GM18951 (cell line): ENCODE measurements at regions of chr7 and their contacts with region 1.

Region 1: DNA sequence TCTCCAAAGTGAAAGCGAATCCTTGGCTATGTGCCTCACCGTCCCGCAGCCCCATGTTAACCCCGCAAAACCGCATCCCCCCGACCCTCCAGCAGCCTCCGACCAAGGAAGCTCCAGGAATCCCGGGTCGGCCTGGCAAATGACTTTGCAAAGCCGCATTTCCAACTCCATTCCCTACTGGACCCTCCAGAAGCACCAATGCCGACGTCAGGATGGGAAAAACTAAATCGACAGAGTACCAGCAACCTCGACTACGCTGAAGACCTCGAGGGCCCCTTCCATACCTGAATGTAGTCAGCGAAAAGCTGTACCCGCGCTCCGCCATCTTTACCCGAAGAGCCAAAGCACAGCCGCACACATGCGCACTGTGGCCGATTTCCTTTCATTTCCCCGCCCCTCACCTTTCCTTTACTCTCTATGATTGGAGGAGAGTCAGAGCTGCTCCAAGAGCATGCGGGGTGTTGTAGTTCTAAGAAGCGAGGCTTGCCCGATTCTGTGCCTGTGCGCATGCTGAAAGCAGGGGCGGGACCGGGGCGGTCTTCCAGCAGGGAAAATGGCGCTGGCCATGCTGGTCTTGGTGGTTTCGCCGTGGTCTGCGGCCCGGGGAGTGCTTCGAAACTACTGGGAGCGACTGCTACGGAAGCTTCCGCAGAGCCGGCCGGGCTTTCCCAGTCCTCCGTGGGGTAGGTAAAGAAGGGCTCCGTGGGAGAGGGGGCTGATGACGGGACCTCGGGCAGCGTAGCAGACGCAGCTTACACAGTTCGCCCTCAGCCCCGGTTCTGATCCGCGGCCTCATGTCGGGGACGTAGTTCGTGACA is at the starts of genes MRPL32 and PSMA2:
- POLR2A ChIP-seq: peak; percentile 91

Region 2: DNA sequence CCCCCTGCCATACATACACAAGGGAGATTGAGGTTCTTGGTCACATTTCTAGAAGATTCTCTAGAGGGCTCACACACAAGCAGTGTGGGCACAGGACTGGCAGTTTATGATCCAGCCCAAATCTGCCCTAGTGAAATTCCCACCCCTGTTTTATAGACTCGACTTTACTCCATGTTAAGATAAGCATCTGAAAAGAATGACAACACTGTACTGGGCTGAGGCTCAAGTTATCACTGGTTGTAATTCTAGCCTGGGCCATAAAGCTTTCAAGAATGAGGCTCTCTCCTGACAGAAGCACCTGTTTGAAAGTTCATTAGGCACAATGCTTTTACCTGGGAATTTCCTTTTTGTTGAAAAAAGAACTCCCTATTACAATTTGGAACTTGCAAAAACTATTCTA is 499.4 kb before region 1 on chr7:
- in situ Hi-C with region 1: no loop called
- POLR2A ChIP-seq: no peak

Region 3: DNA sequence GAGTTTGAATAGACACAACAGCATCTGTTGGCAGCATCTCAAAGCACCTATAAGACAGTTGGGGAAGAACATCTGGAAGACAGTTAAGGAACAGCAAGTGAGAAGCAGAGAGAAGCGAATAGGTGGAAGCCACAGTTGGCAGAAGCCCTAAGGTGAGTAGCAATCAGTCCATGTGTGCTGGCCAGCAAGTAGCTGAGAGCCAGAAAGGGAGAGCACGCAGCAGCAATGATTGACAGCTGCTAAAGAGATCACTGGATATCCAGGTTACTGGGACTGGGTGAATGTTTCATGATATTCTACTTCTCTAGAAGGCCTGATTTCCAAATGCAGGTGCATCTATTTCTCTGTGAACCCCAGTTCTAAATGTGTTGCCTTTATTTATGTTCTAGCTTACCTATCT is 420.1 kb before region 1 on chr7:
- in situ Hi-C with region 1: no loop called
- POLR2A ChIP-seq: no peak

Region 4: GRCh38 chr7:42812779-42813178 is 119.3 kb before region 1 on chr7:
- in situ Hi-C with region 1: no loop called
- POLR2A ChIP-seq: no peak

Region 5: GRCh38 chr7:42876182-42877068 is 55.6 kb before region 1 on chr7:
- in situ Hi-C with region 1: no loop called
- POLR2A ChIP-seq: no peak

Region 6: DNA sequence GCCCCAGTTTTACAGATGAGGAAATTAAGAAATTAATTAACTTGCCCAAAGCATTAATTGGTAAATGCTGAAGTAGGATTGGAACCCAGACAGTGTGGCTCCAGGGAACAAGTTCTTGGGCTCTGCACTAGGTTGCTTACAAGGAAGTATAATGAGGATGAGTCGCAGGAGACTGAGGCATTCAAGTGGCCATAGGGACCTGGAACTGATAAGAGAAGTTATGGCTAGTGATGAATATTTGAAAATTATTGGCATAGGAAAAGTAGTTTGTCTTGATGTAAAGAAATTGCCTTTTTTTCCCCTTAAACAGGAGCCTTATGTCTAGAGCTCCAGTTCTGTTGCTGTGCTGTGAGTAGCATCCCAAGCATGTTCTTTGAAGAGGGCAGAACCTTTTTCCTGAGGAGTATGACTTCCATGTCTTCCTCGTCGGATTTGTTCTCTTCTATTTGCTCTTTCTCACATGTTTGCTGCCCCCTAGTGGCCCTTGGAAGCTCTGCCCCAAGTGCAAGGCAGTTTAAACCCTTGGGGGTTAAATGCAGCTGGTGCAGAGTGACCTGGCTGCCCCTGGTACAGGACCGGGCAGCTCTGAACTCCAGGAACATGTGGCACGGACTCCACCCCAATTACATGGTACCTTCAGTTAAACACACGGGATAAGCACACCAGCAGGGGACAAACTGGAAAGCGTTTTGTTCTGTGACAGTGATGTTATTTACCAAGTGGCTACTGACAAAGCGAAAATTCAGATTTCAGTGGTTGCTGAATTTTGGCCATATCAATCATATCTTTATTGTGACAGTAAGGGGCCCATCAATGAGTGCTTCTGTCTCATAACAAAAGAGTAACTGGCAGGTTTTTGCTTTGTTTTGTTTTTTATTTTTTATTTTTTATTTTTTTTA is 329.2 kb after region 1 on chr7:
- in situ Hi-C with region 1: loop called (anchors 10 kb)
- POLR2A ChIP-seq: no peak

Region 7: GRCh38 chr7:43454936-43455518 is 523.0 kb after region 1 on chr7:
- in situ Hi-C with region 1: loop called (anchors 25 kb)
- POLR2A ChIP-seq: no peak

Region 8: DNA sequence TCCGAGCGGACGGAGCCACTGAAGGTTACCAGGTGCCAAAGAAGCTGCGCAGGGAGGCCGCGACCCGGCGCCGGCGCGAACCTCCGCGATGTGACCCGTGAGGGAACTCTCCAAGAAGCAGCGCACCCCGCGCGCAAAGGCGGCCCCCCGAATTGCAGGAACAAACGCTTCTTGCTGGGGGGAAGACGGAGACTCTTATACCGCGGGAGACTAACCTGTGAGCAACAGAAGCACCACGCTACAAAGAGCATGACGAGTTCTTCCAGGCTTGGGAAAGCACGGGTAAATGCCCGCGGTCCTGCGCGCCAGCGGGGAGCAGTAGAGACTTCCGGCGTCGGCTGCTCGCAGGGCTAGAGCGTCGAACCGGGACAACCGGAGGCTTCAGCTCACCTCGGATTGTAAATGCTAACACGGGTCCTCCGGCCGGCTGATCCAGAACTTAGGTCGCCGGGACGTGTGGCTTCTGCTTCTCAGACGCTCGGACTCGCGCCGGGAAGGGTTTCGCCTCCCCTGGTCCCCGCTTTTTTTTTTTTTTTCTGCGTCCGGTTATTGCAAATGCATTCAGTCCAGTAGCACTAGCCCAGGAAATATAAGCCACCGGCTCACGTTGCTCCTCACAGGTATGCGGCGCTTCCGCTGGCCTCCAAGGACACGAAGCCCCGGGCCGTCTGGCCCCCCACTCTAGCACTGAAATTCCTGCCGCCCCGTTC is 797.3 kb after region 1 on chr7 and contains the start of gene COA1:
- in situ Hi-C with region 1: loop called (anchors 25 kb)
- POLR2A ChIP-seq: peak; percentile 93